PC-9 (cell line): ENCODE measurements at regions of chr7 and their contacts with region 1.

Region 1: GRCh38 chr7:46206474-46207060 is 285.5 kb upstream of the IGFBP3 start:
- DNase-seq: peak; percentile 48 to 52
- H3K4me3 ChIP-seq: no peak overlapping the region
- H3K27ac ChIP-seq: peak overlapping the region; percentile 63; the same call in 1 of the 2 replicates
- H3K4me1 ChIP-seq: peaks cover 25% of the 10 kb centered on the region
- H3K27me3 ChIP-seq: no peaks in the 10 kb centered on the region
- CTCF ChIP-seq: no peak

Region 2: GRCh38 chr7:45978010-45978681 is 228.4 kb before region 1 on chr7:
- CTCF ChIA-PET with region 1: no interaction called
- POLR2A ChIA-PET with region 1: interaction called, 5 read pairs
- intact Hi-C with region 1: loop called (anchors 1 kb)
- DNase-seq: peak; percentile 91 to 100
- H3K4me3 ChIP-seq: peak overlapping the region; percentile 23; the same call in 1 of the 2 replicates
- H3K27ac ChIP-seq: peak overlapping the region; percentile 97
- H3K4me1 ChIP-seq: peaks cover 52% of the 10 kb centered on the region
- H3K27me3 ChIP-seq: no peaks in the 10 kb centered on the region
- CTCF ChIP-seq: no peak

Region 3: DNA sequence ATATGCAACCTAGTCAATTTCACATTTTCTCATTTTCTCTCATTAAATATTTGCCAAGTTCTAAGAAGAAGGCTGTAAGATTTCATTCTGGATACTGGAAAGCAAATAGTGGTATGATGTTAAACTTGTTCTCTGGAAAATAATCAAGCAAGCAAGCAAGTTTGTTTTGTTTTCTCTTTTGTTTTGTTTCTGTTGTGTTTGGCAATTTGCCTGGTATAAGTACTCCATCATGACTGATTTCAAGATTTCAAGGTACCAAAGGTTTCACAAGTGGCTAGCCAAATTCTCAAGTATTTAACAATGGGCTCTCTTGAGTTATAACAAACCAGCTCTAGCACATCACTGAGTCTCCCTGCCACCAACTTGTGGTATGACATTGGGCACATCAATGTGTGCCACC is 133.9 kb before region 1 on chr7:
- CTCF ChIA-PET with region 1: no interaction called
- POLR2A ChIA-PET with region 1: no interaction called
- intact Hi-C with region 1: loop called (anchors 5 kb)
- DNase-seq: peak; percentile 14 to 84
- H3K4me3 ChIP-seq: no peak overlapping the region
- H3K27ac ChIP-seq: peak overlapping the region; percentile 28
- H3K4me1 ChIP-seq: peaks cover 28% of the 10 kb centered on the region
- H3K27me3 ChIP-seq: no peaks in the 10 kb centered on the region
- CTCF ChIP-seq: no peak

Region 4: GRCh38 chr7:46145412-46145811 is 61.2 kb before region 1 on chr7:
- CTCF ChIA-PET with region 1: no interaction called
- POLR2A ChIA-PET with region 1: no interaction called
- intact Hi-C with region 1: loop called (anchors 1 kb)
- DNase-seq: peak; percentile 89 to 99
- H3K4me3 ChIP-seq: no peak overlapping the region
- H3K27ac ChIP-seq: peak overlapping the region; percentile 80
- H3K4me1 ChIP-seq: peaks cover 29% of the 10 kb centered on the region
- H3K27me3 ChIP-seq: no peaks in the 10 kb centered on the region
- CTCF ChIP-seq: no peak

Region 5: GRCh38 chr7:46257766-46258448 is 51.3 kb after region 1 on chr7:
- CTCF ChIA-PET with region 1: interaction called, 7 read pairs
- POLR2A ChIA-PET with region 1: interaction called, 4 read pairs
- intact Hi-C with region 1: loop called (anchors 1 kb)
- DNase-seq: peak; percentile 41 to 87
- H3K4me3 ChIP-seq: no peak overlapping the region
- H3K27ac ChIP-seq: peak overlapping the region; percentile 12; the same call in 1 of the 2 replicates
- H3K4me1 ChIP-seq: peaks cover 23% of the 10 kb centered on the region
- H3K27me3 ChIP-seq: no peaks in the 10 kb centered on the region
- CTCF ChIP-seq: no peak

Region 6: DNA sequence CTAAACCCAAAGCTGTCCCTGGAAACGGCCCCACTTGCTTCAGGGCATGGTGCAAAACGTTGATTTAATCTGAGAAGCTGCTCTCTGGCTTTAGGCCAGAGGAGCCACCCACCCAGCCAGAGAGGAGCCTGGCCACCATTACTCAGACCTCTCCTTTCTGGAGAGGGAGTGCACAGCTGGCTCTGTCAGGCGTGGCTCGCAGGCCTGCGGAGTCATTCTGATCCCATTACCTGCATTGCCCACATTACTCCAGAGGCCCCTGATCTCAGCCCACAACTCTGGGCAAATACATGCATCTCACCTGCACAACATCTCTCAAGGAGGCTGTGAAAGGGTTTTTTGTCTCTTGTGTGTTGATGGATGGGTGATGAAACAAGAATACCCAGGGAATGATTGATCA is 84.5 kb after region 1 on chr7:
- CTCF ChIA-PET with region 1: no interaction called
- POLR2A ChIA-PET with region 1: no interaction called
- intact Hi-C with region 1: loop called (anchors 1 kb)
- DNase-seq: peak; percentile 72 to 83
- H3K4me3 ChIP-seq: no peak overlapping the region
- H3K27ac ChIP-seq: peak overlapping the region; percentile 77
- H3K4me1 ChIP-seq: peaks cover 30% of the 10 kb centered on the region
- H3K27me3 ChIP-seq: no peaks in the 10 kb centered on the region
- CTCF ChIP-seq: no peak